Activated CD4-positive, alpha-beta memory T cell treated with anti-CD3 and anti-CD28 coated beads for 36 hours (primary cell): ENCODE measurements at regions of chr9 and their contacts with region 1.

Region 1: GRCh38 chr9:127943731-127944144 is 6.1 kb upstream of the DPM2 start:
- DNase-seq: peak; percentile 87
- H3K4me3 Mint-ChIP-seq: no peak overlapping the region
- H3K27ac Mint-ChIP-seq: peak overlapping the region; percentile 61
- H3K4me1 Mint-ChIP-seq: peaks cover 18% of the 10 kb centered on the region
- H3K27me3 Mint-ChIP-seq: no peaks in the 10 kb centered on the region

Region 2: GRCh38 chr9:126155756-126156664 is 1787.7 kb before region 1 on chr9:
- CTCF ChIA-PET with region 1: no interaction called
- POLR2A ChIA-PET with region 1: no interaction called
- intact Hi-C with region 1: no loop called
- DNase-seq: peak; percentile 2
- H3K4me3 Mint-ChIP-seq: no peak overlapping the region
- H3K27ac Mint-ChIP-seq: no peak overlapping the region
- H3K4me1 Mint-ChIP-seq: no peaks in the 10 kb centered on the region
- H3K27me3 Mint-ChIP-seq: peaks cover 9% of the 10 kb centered on the region

Region 3: DNA sequence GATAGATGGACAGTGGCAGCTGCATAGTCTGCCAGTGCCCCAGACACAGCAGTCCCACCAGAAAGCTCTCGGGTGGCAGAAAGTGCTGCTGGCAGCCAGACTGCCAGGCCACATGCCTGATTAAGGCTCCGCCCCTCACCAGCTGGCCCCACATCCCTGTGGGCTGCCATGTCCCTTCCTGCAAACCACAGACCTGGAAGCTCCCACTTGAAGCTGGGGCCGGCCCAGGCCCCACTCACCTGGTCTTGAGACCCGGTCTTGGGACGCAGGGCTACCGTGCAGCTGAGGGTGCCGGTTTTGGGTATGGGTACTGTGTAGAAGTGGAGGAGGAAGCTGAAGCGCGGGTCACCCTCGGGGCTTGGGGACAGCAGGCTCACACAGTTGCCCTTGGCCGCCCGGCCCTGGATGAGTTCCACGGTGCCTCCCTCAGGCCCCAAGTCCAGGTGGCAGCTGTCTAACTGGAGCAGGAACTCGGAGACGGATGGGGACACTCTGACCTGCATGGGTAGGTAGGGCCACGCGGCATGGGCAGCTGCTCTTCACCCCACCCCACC is 125.8 kb before region 1 on chr9:
- CTCF ChIA-PET with region 1: no interaction called
- POLR2A ChIA-PET with region 1: no interaction called
- intact Hi-C with region 1: no loop called
- DNase-seq: no peak
- H3K4me3 Mint-ChIP-seq: no peak overlapping the region
- H3K27ac Mint-ChIP-seq: peak overlapping the region; percentile 42
- H3K4me1 Mint-ChIP-seq: no peaks in the 10 kb centered on the region
- H3K27me3 Mint-ChIP-seq: no peaks in the 10 kb centered on the region

Region 4: GRCh38 chr9:127970401-127971313 is 26.9 kb after region 1 on chr9:
- CTCF ChIA-PET with region 1: interaction called, 106 read pairs
- POLR2A ChIA-PET with region 1: no interaction called
- intact Hi-C with region 1: no loop called
- DNase-seq: peak; percentile 89
- H3K4me3 Mint-ChIP-seq: peak overlapping the region; percentile 62
- H3K27ac Mint-ChIP-seq: peak overlapping the region; percentile 88
- H3K4me1 Mint-ChIP-seq: peaks cover 97% of the 10 kb centered on the region
- H3K27me3 Mint-ChIP-seq: no peaks in the 10 kb centered on the region

Region 5: DNA sequence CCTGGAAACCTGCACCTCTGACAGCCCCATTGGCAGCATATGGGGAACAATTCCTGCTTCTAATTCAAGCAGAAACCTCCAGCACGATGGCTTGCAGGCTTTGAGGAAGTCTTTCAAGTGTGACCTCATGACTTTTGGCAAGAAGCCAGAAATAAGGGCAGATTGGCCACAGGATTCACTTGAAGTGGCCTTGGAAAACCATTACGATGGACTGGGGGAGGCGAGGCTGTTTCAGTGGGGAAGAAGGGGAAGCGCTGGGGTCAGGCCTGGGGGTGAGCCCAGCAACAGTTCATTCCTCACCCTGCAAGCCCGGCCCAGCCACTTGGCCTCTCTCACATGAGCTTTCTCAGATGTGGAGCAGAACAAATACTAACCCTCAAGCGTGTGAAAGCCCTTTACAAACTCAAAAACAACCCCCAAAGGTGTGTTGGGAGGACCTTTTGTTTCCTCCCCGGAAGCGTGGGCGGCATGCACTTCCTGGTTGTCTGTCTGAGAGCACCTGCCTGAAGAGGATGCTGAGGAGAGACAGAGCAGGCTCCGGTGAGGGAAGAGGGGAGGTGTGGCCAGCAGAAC is 63.9 kb after region 1 on chr9:
- CTCF ChIA-PET with region 1: interaction called, 15 read pairs
- POLR2A ChIA-PET with region 1: no interaction called
- intact Hi-C with region 1: no loop called
- DNase-seq: peak; percentile 94
- H3K4me3 Mint-ChIP-seq: peak overlapping the region; percentile 80
- H3K27ac Mint-ChIP-seq: peak overlapping the region; percentile 92
- H3K4me1 Mint-ChIP-seq: peaks cover 43% of the 10 kb centered on the region
- H3K27me3 Mint-ChIP-seq: no peaks in the 10 kb centered on the region

Region 6: GRCh38 chr9:128045831-128046230 is 102.1 kb after region 1 on chr9:
- CTCF ChIA-PET with region 1: interaction called, 347 read pairs
- POLR2A ChIA-PET with region 1: no interaction called
- intact Hi-C with region 1: no loop called
- DNase-seq: no peak
- H3K4me3 Mint-ChIP-seq: no peak overlapping the region
- H3K27ac Mint-ChIP-seq: no peak overlapping the region
- H3K4me1 Mint-ChIP-seq: peaks cover 6% of the 10 kb centered on the region
- H3K27me3 Mint-ChIP-seq: peaks cover 1% of the 10 kb centered on the region

Region 7: GRCh38 chr9:128067876-128068613 is 124.3 kb after region 1 on chr9 and contains the start of gene SLC25A25:
- CTCF ChIA-PET with region 1: interaction called, 22 read pairs
- POLR2A ChIA-PET with region 1: no interaction called
- intact Hi-C with region 1: no loop called
- DNase-seq: peak; percentile 100
- H3K4me3 Mint-ChIP-seq: peak within 1 kb of the TSS; percentile 96
- H3K27ac Mint-ChIP-seq: peak within 1 kb of the TSS; percentile 91
- H3K4me1 Mint-ChIP-seq: peaks cover 49% of the 10 kb centered on the region
- H3K27me3 Mint-ChIP-seq: no peaks in the 10 kb centered on the region
- total RNA-seq, gene SLC25A25: 17.1 to 17.3 TPM

Region 8: DNA sequence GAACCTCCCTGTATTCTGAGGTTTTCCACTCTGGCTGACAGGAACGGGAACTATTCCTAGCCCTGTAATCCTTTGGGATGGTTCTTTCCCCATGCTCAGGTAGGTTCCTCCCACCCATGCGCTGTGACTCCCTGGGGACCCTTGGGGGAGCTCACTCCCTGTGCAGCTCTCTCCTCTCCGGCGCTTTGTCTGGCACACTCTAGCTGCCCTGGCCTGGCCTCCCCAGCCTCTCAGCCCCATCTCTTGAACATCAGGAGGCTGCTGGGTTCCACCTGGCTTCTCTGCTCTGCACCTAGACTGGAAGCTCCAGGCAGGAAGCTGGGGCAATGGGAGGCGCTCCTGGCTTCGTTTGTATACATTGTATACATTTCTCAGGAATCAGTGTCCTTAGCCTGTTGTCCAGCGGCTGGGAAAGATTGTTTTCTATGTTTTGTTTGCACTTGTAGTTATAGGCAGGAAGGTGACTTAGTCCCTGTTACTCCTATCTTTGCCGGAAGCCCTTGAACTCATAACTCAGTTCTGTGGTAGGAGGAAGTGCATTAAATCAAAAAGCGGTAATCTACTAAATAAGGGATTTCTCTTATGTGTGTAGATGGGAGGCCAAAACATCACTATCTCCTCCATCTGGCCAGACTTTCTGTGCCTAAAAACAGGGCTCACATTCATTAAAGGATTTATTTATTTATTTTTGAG is 144.7 kb after region 1 on chr9:
- CTCF ChIA-PET with region 1: interaction called, 33 read pairs
- POLR2A ChIA-PET with region 1: no interaction called
- intact Hi-C with region 1: no loop called
- DNase-seq: no peak
- H3K4me3 Mint-ChIP-seq: no peak overlapping the region
- H3K27ac Mint-ChIP-seq: peak overlapping the region; percentile 70
- H3K4me1 Mint-ChIP-seq: peaks cover 61% of the 10 kb centered on the region
- H3K27me3 Mint-ChIP-seq: no peaks in the 10 kb centered on the region

Region 9: DNA sequence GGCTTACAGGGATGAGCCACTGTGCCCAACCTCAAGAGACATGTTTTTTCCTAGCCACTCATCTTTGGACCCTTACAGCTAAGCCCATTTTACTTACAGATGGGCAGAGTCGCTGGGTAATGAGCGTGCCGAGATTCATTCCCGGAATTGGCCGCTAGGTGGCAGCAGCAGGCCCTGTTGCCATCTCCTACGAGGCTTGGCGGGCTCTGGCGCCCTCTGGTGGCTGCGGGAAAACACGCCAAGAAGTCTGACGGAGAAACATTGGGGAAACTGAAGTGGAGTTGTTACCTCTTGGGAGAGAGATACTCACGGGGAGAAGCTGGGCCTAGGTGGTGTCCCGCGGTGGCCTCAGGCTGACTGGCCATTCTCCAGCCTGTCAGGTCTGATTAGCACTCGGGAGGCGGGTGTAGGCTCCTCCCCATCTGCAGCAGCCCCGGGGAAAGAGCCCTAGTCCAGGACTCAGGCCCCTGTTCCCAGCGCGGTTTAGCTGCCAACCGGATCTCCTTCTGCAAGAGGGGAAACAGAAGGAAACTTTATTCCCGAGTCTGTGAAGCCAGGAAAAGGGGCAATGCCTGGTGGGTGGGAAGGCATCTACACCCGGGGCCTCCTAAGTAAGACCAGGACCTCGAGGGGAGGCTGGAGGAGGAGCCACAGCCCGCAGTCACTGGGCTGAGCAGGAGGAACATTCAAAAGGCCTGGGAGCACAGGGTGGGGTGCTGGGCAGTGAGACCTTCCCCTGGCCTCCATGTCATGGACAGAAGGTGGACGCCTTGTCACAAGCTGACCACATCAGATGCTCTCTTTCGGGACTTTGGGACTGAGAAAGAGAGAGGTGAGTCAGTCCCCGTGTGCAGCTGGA is 174.1 kb after region 1 on chr9:
- CTCF ChIA-PET with region 1: interaction called, 31 read pairs
- POLR2A ChIA-PET with region 1: no interaction called
- intact Hi-C with region 1: loop called (anchors 5 kb)
- DNase-seq: peak; percentile 97
- H3K4me3 Mint-ChIP-seq: no peak overlapping the region
- H3K27ac Mint-ChIP-seq: peak overlapping the region; percentile 29
- H3K4me1 Mint-ChIP-seq: peaks cover 8% of the 10 kb centered on the region
- H3K27me3 Mint-ChIP-seq: no peaks in the 10 kb centered on the region